ENCODE measurements at regions of chr12 and their contacts with region 1.

Region 1: GRCh38 chr12:11581179-11581755 is 68.2 kb upstream of the ETV6 start:
- DNase-seq: peak; percentile 80
- H3K4me3 ChIP-seq: no peak overlapping the region
- CTCF ChIP-seq: peak; percentile 30

Region 2: GRCh38 chr12:12032851-12033588 is 451.8 kb after region 1 on chr12:
- in situ Hi-C with region 1: loop called (anchors 25 kb)
- DNase-seq: peak; percentile 90
- H3K4me3 ChIP-seq: peak overlapping the region; percentile 36
- CTCF ChIP-seq: peak; percentile 80